ENCODE measurements at regions of chr11 and their contacts with region 1.

Region 1: DNA sequence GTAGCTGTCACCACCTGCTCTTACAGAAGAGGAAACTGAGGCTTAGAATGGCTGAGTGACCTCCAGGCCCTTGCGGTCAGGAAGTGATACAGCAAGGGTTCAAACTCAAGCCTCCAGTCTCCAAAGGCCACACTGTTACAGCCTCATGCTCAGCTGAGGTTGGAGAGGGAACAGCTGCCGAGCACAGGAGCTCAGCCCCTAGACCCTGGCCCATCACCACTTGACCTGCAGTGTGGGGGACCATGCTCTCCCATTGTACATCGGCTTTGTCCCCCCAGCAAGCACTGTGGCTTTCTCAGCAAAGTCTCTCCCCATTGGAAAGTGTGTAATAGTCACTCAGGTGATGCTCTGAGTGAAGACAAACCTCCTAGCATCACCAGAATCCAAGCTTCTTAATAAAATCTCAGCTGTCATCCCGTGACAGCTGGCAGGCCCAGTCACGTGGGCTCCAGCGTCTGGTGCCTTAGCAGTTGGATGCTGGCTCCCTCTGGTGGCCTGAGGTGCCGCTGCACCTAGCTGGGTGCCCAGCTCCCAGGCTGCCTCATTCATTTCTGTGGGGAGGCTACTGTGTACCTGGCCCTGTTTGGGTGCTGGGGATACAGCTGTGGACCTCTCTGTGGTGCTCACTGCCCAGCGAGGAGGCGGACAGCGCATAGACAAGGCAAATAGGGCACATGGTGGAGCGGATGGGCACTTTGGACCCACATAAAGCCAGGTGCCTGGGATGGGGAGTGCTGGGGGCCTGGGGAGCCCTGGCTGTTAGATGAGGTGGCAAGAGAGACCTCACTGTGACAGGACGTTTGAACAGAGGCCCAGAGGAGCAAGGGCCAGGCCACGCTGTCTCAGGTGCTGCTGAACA is 19.1 kb upstream of the MYRF start:
- DNase-seq: peak; percentile 97
- H3K4me3 ChIP-seq: no peak overlapping the region
- H3K27ac ChIP-seq: peak overlapping the region in 3 of 4 donors; percentile 52 to 65 (median 60)
- H3K4me1 ChIP-seq: peaks cover 0 to 45% (median 28%) of the 10 kb centered on the region in 4 donors
- H3K27me3 ChIP-seq: no peaks in the 10 kb centered on the region
- CTCF ChIP-seq: peak in 2 of 3 experiments; percentile 99
- EP300 ChIP-seq: no peak
- POLR2A ChIP-seq: no peak

Region 2: DNA sequence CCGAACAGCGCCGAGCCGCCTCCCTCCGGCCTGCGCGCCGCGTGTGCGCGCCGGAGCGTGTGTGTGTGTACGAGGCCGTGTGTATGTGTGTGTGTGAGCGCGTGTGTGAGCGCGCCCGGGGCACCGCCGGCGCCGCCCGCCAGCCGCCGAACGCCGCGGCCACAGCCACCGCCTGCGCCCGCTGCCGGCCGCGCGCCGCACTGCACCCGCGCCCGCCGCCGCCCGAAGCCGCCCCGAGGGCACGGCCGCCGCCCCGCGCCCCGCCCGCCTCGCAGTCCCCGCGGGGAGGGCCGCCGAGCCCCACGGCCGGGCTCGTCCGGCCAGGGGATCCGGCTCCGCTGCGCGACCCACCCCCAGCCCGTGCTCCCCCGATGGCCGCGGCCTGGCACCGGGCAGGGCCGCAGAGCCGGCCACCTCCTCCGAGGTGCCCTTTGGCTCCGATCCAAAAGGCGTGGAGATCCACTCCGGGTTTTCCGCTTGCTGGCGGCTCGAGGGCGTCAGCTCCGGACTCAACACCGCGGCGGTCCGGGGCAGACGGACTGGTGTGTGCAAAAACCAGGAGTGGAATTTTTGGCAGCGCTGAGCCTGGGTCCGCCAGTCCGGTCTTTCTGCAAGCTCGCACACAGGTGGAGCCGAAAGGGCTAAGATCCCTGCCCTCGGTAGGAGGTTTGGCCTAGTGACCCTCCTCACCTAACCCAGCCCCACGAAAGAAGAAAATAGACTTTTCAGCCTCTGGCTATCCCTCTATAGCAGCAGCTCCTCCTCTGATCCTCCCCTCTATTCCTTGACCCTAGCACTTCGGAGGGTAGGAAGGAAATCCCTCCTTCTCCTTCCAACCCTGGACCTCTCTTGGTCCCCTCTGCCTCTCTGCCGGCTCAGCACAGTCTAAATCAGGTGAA is 152.1 kb before region 1 on chr11 and contains the start of gene SYT7:
- intact Hi-C with region 1: loop called (anchors 10 kb)
- DNase-seq: peak; percentile 97
- H3K4me3 ChIP-seq: peak within 1 kb of the TSS; percentile 59 to 77 (median 60)
- H3K27ac ChIP-seq: peak within 1 kb of the TSS; percentile 68 to 74 (median 69)
- H3K4me1 ChIP-seq: peaks cover 15 to 20% (median 16%) of the 10 kb centered on the region in 4 donors
- H3K27me3 ChIP-seq: peaks cover 5 to 36% (median 14%) of the 10 kb centered on the region in 4 donors
- CTCF ChIP-seq: peak in 2 of 3 experiments; percentile 9 to 47
- EP300 ChIP-seq: no peak
- POLR2A ChIP-seq: peak; percentile 89
- total RNA-seq, gene SYT7: 1.3 to 4.2 (median 1.8) TPM

Region 3: DNA sequence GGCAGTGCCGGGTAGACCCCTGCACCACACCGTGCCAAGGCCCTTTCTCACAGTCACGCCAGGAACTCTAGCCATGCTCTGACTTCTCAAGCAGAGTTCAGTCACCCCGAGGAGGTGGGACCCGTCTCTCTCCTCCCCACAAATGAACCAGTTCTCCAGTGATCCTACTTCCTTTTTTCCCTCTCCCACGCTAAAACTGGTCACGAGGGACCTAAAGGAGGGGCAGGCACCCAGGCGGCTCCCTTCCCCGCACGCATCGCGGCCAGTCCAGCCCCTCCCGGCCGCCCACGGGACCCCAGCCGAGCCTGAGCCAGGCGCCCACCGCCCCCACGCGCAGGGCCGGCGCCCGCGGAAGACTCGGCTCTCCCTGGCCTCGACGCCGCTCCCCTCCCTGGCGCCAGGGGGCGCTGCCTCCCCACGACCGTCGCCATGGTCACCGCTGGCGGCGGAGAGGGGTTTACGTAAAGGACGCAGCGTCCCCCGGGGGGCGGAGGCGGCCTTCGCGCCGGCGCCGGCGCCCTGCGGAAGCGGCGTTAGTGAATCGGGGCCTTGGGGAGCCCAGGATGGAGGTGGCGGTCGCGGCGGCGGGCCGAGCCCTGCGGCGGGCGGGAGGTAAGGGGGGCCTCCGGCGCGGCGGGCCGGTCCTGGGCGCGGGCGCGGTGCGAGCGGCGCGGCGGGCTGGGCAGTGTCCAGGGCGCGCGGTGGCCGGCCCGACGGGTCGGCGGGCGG is 53.3 kb before region 1 on chr11 and contains the start of gene DAGLA:
- intact Hi-C with region 1: loop called (anchors 1 kb)
- DNase-seq: no peak
- H3K4me3 ChIP-seq: peak within 1 kb of the TSS; percentile 55 to 79 (median 60)
- H3K27ac ChIP-seq: peak within 1 kb of the TSS in 3 of 4 donors; percentile 30 to 51 (median 49)
- H3K4me1 ChIP-seq: peaks cover 33 to 53% (median 52%) of the 10 kb centered on the region in 4 donors
- H3K27me3 ChIP-seq: peaks cover 0 to 46% (median 0%) of the 10 kb centered on the region in 4 donors
- CTCF ChIP-seq: peak; percentile 94 to 98 (median 95)
- EP300 ChIP-seq: no peak
- POLR2A ChIP-seq: no peak
- total RNA-seq, gene DAGLA: 1.5 to 4.9 (median 3.8) TPM

Measured in esophagus muscularis mucosa (tissue), 4 donors.